PC-9 (cell line): ENCODE measurements at regions of chr7 and their contacts with region 1.

Region 1: GRCh38 chr7:90629297-90629918 is 33.3 kb downstream of the CDK14 start:
- DNase-seq: no peak
- H3K4me3 ChIP-seq: no peak overlapping the region
- H3K27ac ChIP-seq: no peak overlapping the region
- H3K4me1 ChIP-seq: no peaks in the 10 kb centered on the region
- H3K27me3 ChIP-seq: no peaks in the 10 kb centered on the region
- CTCF ChIP-seq: peak; percentile 66

Region 2: DNA sequence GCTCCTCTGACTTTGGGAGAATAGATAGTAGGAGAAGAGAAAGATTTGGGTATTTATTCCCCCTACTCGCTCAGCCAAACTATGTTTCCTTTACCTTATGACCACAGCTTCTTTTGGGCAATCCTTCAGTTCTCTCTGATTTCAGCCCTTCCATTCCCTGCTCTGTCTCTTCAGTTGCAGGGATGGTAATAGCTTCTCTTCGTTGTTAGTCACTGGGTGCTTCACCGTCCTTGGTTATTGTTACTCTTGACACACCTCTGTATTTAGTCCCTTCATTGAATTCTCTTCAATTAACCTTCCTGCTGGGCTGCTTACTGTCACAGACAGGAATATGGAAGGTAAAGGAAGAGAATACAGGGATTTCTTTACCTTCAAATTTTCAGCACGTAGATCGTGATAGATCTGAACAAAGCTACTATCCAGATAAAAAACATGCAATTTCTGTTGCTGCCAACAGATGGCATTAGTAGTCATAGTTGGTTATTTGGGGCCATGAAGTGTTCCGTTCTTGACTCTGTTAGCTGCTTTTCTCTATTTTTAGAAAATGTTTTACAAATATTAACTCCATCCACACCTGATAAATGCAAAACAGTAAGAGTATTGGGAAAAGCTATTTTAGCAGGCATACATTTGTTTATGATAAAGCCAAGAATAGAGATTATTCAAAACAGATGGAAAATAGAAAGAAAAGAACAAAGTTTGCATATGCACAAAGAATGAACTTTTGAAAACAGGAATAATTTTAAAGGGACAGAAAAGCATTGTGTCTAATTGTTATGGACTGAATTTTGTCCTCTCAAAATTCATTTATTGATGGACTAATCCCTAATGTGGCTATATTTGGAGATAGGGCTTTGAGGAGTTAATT is 174.0 kb before region 1 on chr7:
- CTCF ChIA-PET with region 1: interaction called, 15 read pairs
- POLR2A ChIA-PET with region 1: no interaction called
- intact Hi-C with region 1: loop called (anchors 1 kb)
- DNase-seq: no peak
- H3K4me3 ChIP-seq: no peak overlapping the region
- H3K27ac ChIP-seq: no peak overlapping the region
- H3K4me1 ChIP-seq: no peaks in the 10 kb centered on the region
- H3K27me3 ChIP-seq: no peaks in the 10 kb centered on the region
- CTCF ChIP-seq: peak; percentile 70

Region 3: DNA sequence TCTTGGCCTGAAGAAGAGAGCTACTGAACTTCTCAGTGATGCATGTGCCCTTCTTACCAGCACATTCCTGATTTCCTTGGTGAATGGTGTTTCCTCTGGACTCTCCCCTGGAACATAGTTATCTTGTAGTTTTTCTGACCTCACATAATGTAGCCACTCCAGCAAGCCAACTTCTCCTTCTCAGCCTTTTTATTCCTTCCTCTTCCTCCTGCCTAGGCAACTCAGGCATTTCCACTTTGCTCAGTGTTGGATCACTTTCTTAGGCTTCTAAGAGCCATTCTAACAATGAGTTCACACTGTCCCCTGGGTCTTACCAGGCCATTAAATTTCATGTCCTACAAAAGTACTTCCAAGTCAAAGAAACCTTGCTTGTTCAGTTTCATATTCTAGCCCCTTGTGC is 163.6 kb before region 1 on chr7:
- CTCF ChIA-PET with region 1: no interaction called
- POLR2A ChIA-PET with region 1: no interaction called
- intact Hi-C with region 1: no loop called
- DNase-seq: no peak
- H3K4me3 ChIP-seq: no peak overlapping the region
- H3K27ac ChIP-seq: no peak overlapping the region
- H3K4me1 ChIP-seq: no peaks in the 10 kb centered on the region
- H3K27me3 ChIP-seq: no peaks in the 10 kb centered on the region
- CTCF ChIP-seq: no peak

Region 4: GRCh38 chr7:90552521-90552920 is 76.9 kb before region 1 on chr7:
- CTCF ChIA-PET with region 1: no interaction called
- POLR2A ChIA-PET with region 1: no interaction called
- intact Hi-C with region 1: loop called (anchors 2 kb)
- DNase-seq: no peak
- H3K4me3 ChIP-seq: no peak overlapping the region
- H3K27ac ChIP-seq: no peak overlapping the region
- H3K4me1 ChIP-seq: no peaks in the 10 kb centered on the region
- H3K27me3 ChIP-seq: no peaks in the 10 kb centered on the region
- CTCF ChIP-seq: no peak

Region 5: GRCh38 chr7:90595801-90596671 is 33.4 kb before region 1 on chr7 and contains the start of gene CDK14:
- CTCF ChIA-PET with region 1: interaction called, 3 read pairs
- POLR2A ChIA-PET with region 1: no interaction called
- intact Hi-C with region 1: loop called (anchors 2 kb)
- DNase-seq: peak in 1 of 2 experiments; percentile 79
- H3K4me3 ChIP-seq: peak within 1 kb of the TSS; percentile 59
- H3K27ac ChIP-seq: no peak within 1 kb of the TSS
- H3K4me1 ChIP-seq: peaks cover 8% of the 10 kb centered on the region; the same call in 1 of the 2 replicates
- H3K27me3 ChIP-seq: peaks cover 24% of the 10 kb centered on the region
- CTCF ChIP-seq: no peak; the same call in 1 of the 2 replicates
- total RNA-seq, gene CDK14: 39.1 and 41.6 TPM in 2 replicates

Region 6: GRCh38 chr7:90604383-90604782 is 25.0 kb before region 1 on chr7:
- CTCF ChIA-PET with region 1: no interaction called
- POLR2A ChIA-PET with region 1: no interaction called
- intact Hi-C with region 1: loop called (anchors 1 kb)
- DNase-seq: no peak
- H3K4me3 ChIP-seq: no peak overlapping the region
- H3K27ac ChIP-seq: no peak overlapping the region
- H3K4me1 ChIP-seq: no peaks in the 10 kb centered on the region
- H3K27me3 ChIP-seq: no peaks in the 10 kb centered on the region
- CTCF ChIP-seq: no peak

Region 7: DNA sequence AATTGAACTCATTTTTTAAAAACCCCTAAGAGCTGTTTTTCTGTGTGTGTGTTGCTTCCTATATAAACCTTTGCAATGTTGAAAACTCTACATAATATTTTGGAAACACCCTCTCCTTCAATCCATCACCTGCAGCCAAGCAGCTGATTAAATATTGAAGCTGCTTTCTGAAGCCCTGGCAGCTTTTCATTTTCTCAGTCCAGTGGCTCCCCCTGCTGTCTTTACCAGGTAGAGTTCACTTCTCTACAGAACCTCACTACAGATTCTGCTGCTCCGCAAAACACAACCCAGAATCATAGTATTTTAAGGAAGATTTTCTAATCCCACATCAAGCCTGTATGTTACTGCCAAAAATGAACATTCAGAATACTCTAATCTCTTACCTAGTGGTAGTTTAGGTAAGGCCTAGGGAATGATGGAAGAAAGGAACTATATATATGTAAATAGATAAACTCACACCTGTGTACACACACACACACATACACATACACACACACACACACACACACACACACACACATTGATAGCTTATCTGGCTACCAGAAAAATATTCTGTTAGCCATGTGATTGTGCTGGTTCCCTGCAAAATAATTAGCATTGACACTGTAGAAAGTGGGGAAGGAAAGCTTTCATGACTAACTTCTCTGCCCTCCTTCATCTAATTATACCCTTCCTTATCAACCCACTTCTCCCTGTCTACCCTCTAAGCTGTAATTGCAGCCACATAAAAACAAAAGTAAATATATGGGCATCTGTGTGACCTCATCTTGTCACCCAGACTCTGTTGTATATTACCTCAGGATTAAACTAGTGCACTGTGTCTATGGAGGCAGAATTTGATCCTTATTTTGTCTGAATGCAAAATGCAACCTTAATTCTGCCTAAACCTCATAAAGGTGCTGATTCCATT is 405.3 kb after region 1 on chr7:
- CTCF ChIA-PET with region 1: no interaction called
- POLR2A ChIA-PET with region 1: no interaction called
- intact Hi-C with region 1: loop called (anchors 2 kb)
- DNase-seq: peak in 1 of 2 experiments; percentile 42
- H3K4me3 ChIP-seq: no peak overlapping the region
- H3K27ac ChIP-seq: no peak overlapping the region
- H3K4me1 ChIP-seq: no peaks in the 10 kb centered on the region
- H3K27me3 ChIP-seq: no peaks in the 10 kb centered on the region
- CTCF ChIP-seq: peak; percentile 53